Tibial artery (tissue), 4 donors: ENCODE measurements at regions of chr1 and their contacts with region 1.

Region 1: GRCh38 chr1:19504796-19505692 is 19.7 kb upstream of the CAPZB start:
- DNase-seq: peak in 1 of 2 donors; percentile 78
- H3K4me3 ChIP-seq: no peak overlapping the region
- H3K27ac ChIP-seq: peak overlapping the region; percentile 58 to 62
- H3K4me1 ChIP-seq: peaks cover 0 to 9% (median 4%) of the 10 kb centered on the region in 4 donors
- H3K27me3 ChIP-seq: no peaks in the 10 kb centered on the region
- CTCF ChIP-seq: no peak

Region 2: DNA sequence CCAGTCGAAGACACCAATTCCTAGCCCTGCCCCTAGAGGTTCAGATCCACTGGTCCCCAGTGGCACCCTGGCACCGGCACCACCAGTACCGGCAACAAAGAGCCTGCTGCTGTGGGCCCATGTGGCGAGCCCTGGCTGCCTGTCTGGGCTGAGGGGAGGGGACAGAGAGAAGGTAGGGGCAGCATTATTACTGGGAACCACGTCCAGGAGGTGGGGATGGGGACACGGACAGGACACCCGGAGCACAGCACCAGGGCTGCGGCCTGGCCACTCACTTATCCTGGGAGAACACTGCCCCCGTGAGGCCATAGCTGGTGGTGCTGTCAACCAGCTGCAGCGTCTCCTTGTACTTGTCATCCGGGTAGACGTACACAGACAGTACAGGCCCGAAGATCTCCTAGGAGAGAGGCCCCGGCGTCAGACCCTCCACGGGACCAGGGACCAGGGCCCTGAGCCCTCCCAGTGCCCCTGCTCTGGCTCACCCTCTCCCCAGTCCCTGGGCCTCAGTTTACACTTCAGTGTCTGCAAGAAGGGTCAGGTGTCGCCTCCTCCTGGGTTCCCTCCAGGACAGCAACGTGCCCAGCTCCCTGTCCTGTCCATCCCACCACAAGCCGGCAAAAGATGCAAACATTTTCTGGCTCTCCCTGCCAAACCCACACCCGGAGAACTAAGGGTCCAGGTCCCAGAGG is 629.8 kb before region 1 on chr1:
- intact Hi-C with region 1: loop called (anchors 5 kb)
- DNase-seq: peak; percentile 85
- H3K4me3 ChIP-seq: no peak overlapping the region
- H3K27ac ChIP-seq: no peak overlapping the region
- H3K4me1 ChIP-seq: no peaks in the 10 kb centered on the region
- H3K27me3 ChIP-seq: no peaks in the 10 kb centered on the region
- CTCF ChIP-seq: peak; percentile 67 to 83

Region 3: GRCh38 chr1:19260211-19261138 is 244.6 kb before region 1 on chr1:
- intact Hi-C with region 1: no loop called
- DNase-seq: no peak
- H3K4me3 ChIP-seq: no peak overlapping the region
- H3K27ac ChIP-seq: no peak overlapping the region
- H3K4me1 ChIP-seq: no peaks in the 10 kb centered on the region
- H3K27me3 ChIP-seq: no peaks in the 10 kb centered on the region
- CTCF ChIP-seq: no peak

Region 4: DNA sequence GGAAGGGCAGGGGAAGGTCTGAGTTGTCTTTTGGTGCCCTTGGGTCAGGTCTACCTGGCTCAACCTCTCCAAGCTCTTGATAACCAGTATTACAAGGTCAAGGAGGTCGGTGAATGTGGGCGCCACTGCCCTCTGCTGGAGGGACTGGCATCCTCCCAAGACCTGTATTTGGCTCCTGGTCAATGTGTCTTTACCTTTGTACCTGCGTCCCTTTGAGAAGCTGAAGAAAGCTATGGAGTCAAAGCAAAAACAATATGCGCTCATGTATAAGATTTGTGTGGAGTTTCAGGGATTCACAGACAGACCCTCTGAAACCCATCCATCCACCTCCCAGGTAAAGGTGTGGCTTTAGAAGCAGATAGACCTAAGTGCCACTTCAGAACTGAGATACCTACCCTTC is 77.3 kb after region 1 on chr1:
- intact Hi-C with region 1: no loop called
- DNase-seq: peak in 1 of 2 donors; percentile 34
- H3K4me3 ChIP-seq: no peak overlapping the region
- H3K27ac ChIP-seq: no peak overlapping the region
- H3K4me1 ChIP-seq: no peaks in the 10 kb centered on the region
- H3K27me3 ChIP-seq: no peaks in the 10 kb centered on the region
- CTCF ChIP-seq: peak; percentile 44 to 47

Region 5: GRCh38 chr1:19616489-19616888 is 111.4 kb after region 1 on chr1:
- intact Hi-C with region 1: loop called (anchors 10 kb)
- DNase-seq: no peak
- H3K4me3 ChIP-seq: no peak overlapping the region
- H3K27ac ChIP-seq: no peak overlapping the region
- H3K4me1 ChIP-seq: peaks cover 0 to 26% (median 10%) of the 10 kb centered on the region in 4 donors
- H3K27me3 ChIP-seq: no peaks in the 10 kb centered on the region
- CTCF ChIP-seq: no peak